MCF 10A (cell line): ENCODE measurements at regions of chr4 and their contacts with region 1.

Region 1: DNA sequence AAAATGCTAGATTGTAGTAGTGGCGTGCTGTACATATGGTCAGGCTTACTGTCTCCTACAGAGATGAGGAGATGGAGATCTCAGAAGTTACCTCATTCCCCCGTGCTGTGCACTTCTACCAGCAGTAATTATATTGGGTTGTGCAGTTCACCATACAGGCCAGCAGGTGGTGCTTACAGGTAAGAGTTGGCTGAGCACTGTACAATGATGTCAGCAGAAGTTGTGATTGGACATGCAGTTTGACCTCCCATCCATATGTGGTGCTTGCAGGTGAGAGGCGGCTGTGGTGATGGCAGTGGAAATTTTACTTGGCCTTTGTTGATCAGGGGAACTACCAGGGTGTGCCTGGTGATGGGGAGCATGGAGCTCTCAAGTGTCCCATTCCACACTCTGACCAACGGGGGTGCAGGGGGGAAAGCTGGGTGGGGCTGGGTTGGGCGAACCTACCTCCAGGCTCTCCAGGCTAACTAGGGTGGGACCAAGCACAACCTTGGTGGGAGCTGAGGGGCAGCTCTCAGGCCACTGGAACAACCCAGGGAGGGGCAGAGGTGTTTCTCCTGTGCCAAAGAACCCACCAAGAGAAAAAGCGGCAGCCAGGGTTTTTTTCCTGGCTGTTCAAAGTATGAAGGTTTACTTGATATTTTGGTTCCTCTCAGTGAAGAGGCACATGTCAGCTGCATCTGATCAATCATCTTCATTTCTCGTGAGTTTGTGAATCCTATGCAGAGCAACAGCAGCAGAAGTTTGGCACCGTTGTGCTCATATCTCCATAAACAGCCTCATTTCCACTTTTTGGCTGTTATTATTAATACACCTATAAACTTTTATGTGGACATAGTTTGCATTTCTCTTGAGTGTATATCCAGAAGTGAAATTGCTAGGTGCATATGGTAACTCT is 73.8 kb upstream of the FREM3 start:
- DNase-seq: peak; percentile 72
- H3K4me3 Mint-ChIP-seq: no peak overlapping the region
- H3K27ac Mint-ChIP-seq: no peak overlapping the region
- H3K4me1 Mint-ChIP-seq: no peaks in the 10 kb centered on the region
- H3K27me3 Mint-ChIP-seq: peaks cover 86% of the 10 kb centered on the region
- CTCF ChIP-seq: peak; percentile 74

Region 2: GRCh38 chr4:142824368-142824767 is 949.9 kb before region 1 on chr4:
- CTCF ChIA-PET with region 1: no interaction called
- POLR2A ChIA-PET with region 1: no interaction called
- intact Hi-C with region 1: no loop called
- DNase-seq: no peak
- H3K4me3 Mint-ChIP-seq: no peak overlapping the region
- H3K27ac Mint-ChIP-seq: no peak overlapping the region
- H3K4me1 Mint-ChIP-seq: no peaks in the 10 kb centered on the region
- H3K27me3 Mint-ChIP-seq: no peaks in the 10 kb centered on the region
- CTCF ChIP-seq: no peak

Region 3: DNA sequence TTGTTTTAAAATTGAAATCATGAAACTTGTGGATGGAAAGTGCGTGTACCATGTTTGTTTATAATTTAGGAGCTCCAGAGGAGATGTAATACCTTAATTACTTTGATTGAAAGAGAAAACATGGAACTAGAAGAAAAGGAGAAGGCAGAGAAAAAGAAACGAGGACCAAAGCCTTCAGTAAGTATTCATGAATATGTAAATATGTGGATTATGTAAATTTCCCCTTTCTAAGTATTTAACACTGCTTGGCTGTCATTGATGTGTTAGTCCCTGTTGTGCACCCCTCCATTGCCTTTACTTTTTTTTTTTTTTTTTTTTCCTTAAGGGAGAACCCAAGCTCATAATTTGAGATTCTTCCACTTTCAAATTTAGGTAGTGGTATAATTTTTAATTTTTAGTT is 224.3 kb before region 1 on chr4:
- CTCF ChIA-PET with region 1: no interaction called
- POLR2A ChIA-PET with region 1: no interaction called
- intact Hi-C with region 1: no loop called
- DNase-seq: no peak
- H3K4me3 Mint-ChIP-seq: no peak overlapping the region
- H3K27ac Mint-ChIP-seq: no peak overlapping the region
- H3K4me1 Mint-ChIP-seq: no peaks in the 10 kb centered on the region
- H3K27me3 Mint-ChIP-seq: no peaks in the 10 kb centered on the region
- CTCF ChIP-seq: no peak

Region 4: DNA sequence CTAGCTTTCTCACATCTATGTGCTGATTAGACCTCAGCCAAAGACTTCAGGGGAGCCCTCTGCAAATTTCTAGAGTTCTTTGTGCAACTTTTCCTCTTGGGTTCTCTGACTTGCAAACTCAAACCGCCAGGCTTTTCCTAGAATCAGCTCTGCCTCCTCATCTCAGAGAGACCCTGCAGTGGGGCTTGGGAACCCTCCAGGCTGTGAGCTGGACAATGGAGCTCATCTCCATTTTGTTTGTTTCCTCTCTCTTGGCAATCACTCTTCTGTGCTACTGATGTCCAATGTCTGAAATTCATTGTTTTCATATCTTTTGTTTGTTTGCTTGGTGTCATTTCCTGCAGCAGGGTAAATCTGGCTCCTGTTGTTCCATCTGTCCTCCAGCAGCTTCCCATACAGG is 211.9 kb after region 1 on chr4:
- CTCF ChIA-PET with region 1: interaction called, 6 read pairs
- POLR2A ChIA-PET with region 1: no interaction called
- intact Hi-C with region 1: loop called (anchors 2 kb)
- DNase-seq: no peak
- H3K4me3 Mint-ChIP-seq: no peak overlapping the region
- H3K27ac Mint-ChIP-seq: no peak overlapping the region
- H3K4me1 Mint-ChIP-seq: no peaks in the 10 kb centered on the region
- H3K27me3 Mint-ChIP-seq: no peaks in the 10 kb centered on the region
- CTCF ChIP-seq: no peak

Region 5: GRCh38 chr4:144014808-144015207 is 240.6 kb after region 1 on chr4:
- CTCF ChIA-PET with region 1: interaction called, 3 read pairs
- POLR2A ChIA-PET with region 1: no interaction called
- intact Hi-C with region 1: loop called (anchors 5 kb)
- DNase-seq: no peak
- H3K4me3 Mint-ChIP-seq: no peak overlapping the region
- H3K27ac Mint-ChIP-seq: no peak overlapping the region
- H3K4me1 Mint-ChIP-seq: peaks cover 6% of the 10 kb centered on the region
- H3K27me3 Mint-ChIP-seq: peaks cover 2% of the 10 kb centered on the region
- CTCF ChIP-seq: no peak

Region 6: DNA sequence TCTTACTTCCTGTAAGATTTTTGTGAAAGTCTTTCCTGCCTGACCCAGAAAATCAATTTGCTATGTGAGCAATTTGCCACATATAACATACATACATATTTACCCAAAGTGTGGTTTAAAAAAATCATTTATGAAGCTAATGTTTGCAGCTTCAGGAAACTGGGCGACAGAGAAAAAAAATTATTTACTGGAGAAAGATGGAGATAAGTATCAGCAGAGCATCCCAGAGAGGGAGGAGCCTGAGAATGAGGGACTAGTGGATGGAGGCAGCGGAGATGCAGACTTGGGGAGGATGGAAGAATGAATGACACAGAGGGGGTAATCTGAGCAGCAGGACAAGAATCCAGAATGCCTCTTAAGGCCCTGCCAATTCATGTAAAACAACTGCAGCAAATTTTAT is 367.2 kb after region 1 on chr4:
- CTCF ChIA-PET with region 1: no interaction called
- POLR2A ChIA-PET with region 1: no interaction called
- intact Hi-C with region 1: loop called (anchors 1 kb)
- DNase-seq: no peak
- H3K4me3 Mint-ChIP-seq: no peak overlapping the region
- H3K27ac Mint-ChIP-seq: no peak overlapping the region
- H3K4me1 Mint-ChIP-seq: no peaks in the 10 kb centered on the region
- H3K27me3 Mint-ChIP-seq: peaks cover 41% of the 10 kb centered on the region
- CTCF ChIP-seq: no peak